B cell (primary cell): ENCODE measurements at regions of chr18 and their contacts with region 1.

Region 1: GRCh38 chr18:79393635-79394533 is 1.8 kb upstream of the NFATC1 start:
- DNase-seq: peak; percentile 65
- ATAC-seq: peak; percentile 18
- H3K4me3 ChIP-seq: peak overlapping the region in 4 of 5 experiments; percentile 42 to 78 (median 60)
- H3K4me3 Mint-ChIP-seq: peak overlapping the region; percentile 85
- H3K27ac ChIP-seq: peak overlapping the region; percentile 49 to 66
- H3K27ac Mint-ChIP-seq: peak overlapping the region; percentile 74
- H3K4me1 ChIP-seq: peaks cover 38 to 45% of the 10 kb centered on the region in 2 donors
- H3K4me1 Mint-ChIP-seq: peaks cover 36% of the 10 kb centered on the region
- H3K27me3 ChIP-seq: peaks cover 0 to 3% (median 0%) of the 10 kb centered on the region in 4 experiments
- H3K27me3 Mint-ChIP-seq: no peaks in the 10 kb centered on the region
- CTCF ChIP-seq: no peak

Region 2: DNA sequence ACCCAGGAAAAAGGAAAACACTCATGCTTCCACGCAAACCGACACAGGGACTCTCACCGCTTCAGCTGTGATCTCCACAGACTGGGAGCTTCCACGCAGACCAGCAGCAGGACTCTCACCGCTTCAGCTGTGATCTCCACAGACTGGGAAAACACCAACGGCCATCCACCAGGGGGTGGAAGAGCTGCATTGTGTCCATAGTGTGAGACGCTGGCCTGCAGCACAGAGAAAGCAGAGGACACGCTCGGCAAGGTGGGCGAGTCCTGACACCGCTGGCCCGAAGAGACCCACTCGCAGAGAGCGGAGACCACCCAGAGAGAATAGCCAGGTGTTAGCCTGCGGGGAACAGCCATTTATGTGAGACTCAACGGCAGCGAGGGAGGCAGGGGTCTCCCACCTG is 40.6 kb before region 1 on chr18:
- CTCF ChIA-PET with region 1: no interaction called
- POLR2A ChIA-PET with region 1: no interaction called
- intact Hi-C with region 1: no loop called
- DNase-seq: no peak
- ATAC-seq: no peak
- H3K4me3 ChIP-seq: no peak overlapping the region
- H3K4me3 Mint-ChIP-seq: no peak overlapping the region
- H3K27ac ChIP-seq: no peak overlapping the region
- H3K27ac Mint-ChIP-seq: no peak overlapping the region
- H3K4me1 ChIP-seq: peaks cover 0 to 9% of the 10 kb centered on the region in 2 donors
- H3K4me1 Mint-ChIP-seq: peaks cover 15% of the 10 kb centered on the region
- H3K27me3 ChIP-seq: no peaks in the 10 kb centered on the region
- H3K27me3 Mint-ChIP-seq: no peaks in the 10 kb centered on the region
- CTCF ChIP-seq: no peak

Region 3: GRCh38 chr18:79439201-79440023 is 45.5 kb after region 1 on chr18:
- CTCF ChIA-PET with region 1: interaction called, 7 read pairs
- POLR2A ChIA-PET with region 1: interaction called, 3 read pairs
- intact Hi-C with region 1: loop called (anchors 5 kb)
- DNase-seq: peak; percentile 35
- ATAC-seq: no peak
- H3K4me3 ChIP-seq: no peak overlapping the region
- H3K4me3 Mint-ChIP-seq: no peak overlapping the region
- H3K27ac ChIP-seq: peak overlapping the region in 1 of 2 donors; percentile 46
- H3K27ac Mint-ChIP-seq: peak overlapping the region; percentile 50
- H3K4me1 ChIP-seq: peaks cover 38 to 83% of the 10 kb centered on the region in 2 donors
- H3K4me1 Mint-ChIP-seq: peaks cover 76% of the 10 kb centered on the region
- H3K27me3 ChIP-seq: no peaks in the 10 kb centered on the region
- H3K27me3 Mint-ChIP-seq: no peaks in the 10 kb centered on the region
- CTCF ChIP-seq: no peak

Region 4: DNA sequence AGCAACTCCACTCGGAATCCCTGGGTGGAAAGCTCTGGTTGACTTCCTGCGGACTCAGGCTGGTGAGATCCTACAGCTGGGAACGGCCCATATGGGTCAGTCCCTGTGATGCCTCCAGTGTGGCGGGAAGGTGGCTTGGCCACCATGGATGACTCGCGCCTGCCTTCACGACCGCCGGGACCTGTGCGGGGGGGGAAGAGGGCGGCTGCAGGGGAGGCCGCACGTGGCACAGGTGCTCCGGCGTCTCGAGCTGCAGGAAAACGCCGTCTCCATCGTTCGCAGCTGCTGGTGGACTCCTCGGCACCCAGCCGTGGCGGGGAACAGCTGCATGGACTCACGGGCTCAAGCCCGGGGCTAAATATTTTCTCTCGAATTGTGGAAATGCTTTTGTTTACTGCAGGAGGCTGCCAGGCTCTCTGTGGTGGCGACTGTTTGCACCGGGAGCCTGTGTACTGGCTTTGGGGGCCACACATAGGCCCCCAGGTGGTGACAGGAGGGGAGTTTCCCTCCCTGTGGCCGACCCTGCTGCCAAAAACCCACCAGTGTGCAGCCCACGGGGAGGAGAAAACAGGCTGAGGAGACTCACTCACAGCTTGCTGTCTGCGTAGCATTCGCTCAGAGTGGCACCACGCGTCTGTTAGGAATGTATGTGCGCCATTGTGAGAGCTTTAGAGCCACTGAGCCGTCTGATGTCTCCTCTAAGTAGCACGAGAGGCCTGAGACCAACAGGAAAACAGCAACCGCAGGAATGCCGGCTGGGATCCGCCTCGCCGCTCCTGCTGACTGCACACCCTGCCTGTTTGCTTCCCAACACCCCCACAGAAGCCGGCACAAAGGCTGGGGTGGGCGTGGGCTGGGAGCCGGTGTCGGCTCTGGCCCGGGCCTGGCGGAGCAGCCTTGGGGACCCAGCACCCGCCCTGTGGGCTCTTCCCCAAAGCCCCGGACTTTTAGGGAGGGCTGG is 91.1 kb after region 1 on chr18:
- CTCF ChIA-PET with region 1: no interaction called
- POLR2A ChIA-PET with region 1: no interaction called
- intact Hi-C with region 1: no loop called
- DNase-seq: no peak
- ATAC-seq: no peak
- H3K4me3 ChIP-seq: no peak overlapping the region
- H3K4me3 Mint-ChIP-seq: no peak overlapping the region
- H3K27ac ChIP-seq: no peak overlapping the region
- H3K27ac Mint-ChIP-seq: peak overlapping the region; percentile 59
- H3K4me1 ChIP-seq: no peaks in the 10 kb centered on the region
- H3K4me1 Mint-ChIP-seq: peaks cover 3% of the 10 kb centered on the region
- H3K27me3 ChIP-seq: no peaks in the 10 kb centered on the region
- H3K27me3 Mint-ChIP-seq: no peaks in the 10 kb centered on the region
- CTCF ChIP-seq: no peak

Region 5: GRCh38 chr18:79507076-79507545 is 113.2 kb after region 1 on chr18:
- CTCF ChIA-PET with region 1: interaction called, 23 read pairs
- POLR2A ChIA-PET with region 1: interaction called, 8 read pairs
- intact Hi-C with region 1: no loop called
- DNase-seq: peak; percentile 71
- ATAC-seq: peak; percentile 29
- H3K4me3 ChIP-seq: peak overlapping the region in 4 of 5 experiments; percentile 17 to 43 (median 36)
- H3K4me3 Mint-ChIP-seq: peak overlapping the region; percentile 75
- H3K27ac ChIP-seq: peak overlapping the region; percentile 86 to 91
- H3K27ac Mint-ChIP-seq: peak overlapping the region; percentile 93
- H3K4me1 ChIP-seq: peaks cover 48 to 56% of the 10 kb centered on the region in 2 donors
- H3K4me1 Mint-ChIP-seq: peaks cover 60% of the 10 kb centered on the region
- H3K27me3 ChIP-seq: no peaks in the 10 kb centered on the region
- H3K27me3 Mint-ChIP-seq: no peaks in the 10 kb centered on the region
- CTCF ChIP-seq: no peak

Region 6: GRCh38 chr18:79528846-79529245 is 135.0 kb after region 1 on chr18:
- CTCF ChIA-PET with region 1: interaction called, 38 read pairs
- POLR2A ChIA-PET with region 1: interaction called, 13 read pairs
- intact Hi-C with region 1: no loop called
- DNase-seq: peak; percentile 83
- ATAC-seq: peak; percentile 34
- H3K4me3 ChIP-seq: no peak overlapping the region
- H3K4me3 Mint-ChIP-seq: no peak overlapping the region
- H3K27ac ChIP-seq: no peak overlapping the region
- H3K27ac Mint-ChIP-seq: no peak overlapping the region
- H3K4me1 ChIP-seq: peaks cover 15 to 24% of the 10 kb centered on the region in 2 donors
- H3K4me1 Mint-ChIP-seq: peaks cover 26% of the 10 kb centered on the region
- H3K27me3 ChIP-seq: no peaks in the 10 kb centered on the region
- H3K27me3 Mint-ChIP-seq: no peaks in the 10 kb centered on the region
- CTCF ChIP-seq: peak; percentile 94

Region 7: DNA sequence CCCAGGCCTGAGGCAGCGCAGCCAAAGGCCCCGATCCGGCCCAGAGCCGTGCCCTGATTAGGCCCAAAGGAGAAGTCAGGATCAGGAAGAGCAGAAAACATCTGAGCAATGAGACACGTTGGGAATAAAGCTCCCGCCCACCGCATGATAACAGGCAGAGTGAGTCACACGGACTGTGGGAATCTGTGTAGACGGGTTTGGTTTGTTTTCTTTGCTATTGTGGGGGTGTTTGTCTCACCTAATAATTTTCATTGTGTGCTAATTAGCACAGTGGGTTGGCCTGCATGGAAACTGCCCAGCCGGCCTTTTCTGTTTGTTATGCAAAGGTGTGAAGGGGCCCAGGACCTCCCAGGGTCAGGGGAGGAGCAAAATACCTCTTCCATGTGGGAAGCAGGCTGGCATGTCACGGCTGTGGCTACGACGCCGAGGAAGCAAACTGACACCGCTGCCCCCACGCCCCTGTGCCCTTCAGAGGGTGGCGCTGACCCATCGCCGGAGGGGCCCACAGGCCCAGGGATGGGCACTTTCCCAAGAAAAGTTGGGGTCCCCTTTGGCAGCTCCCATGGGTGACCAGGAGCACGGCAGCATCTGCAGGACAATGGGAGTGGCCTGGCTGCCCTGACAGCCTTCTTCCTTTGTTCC is 217.3 kb after region 1 on chr18:
- CTCF ChIA-PET with region 1: no interaction called
- POLR2A ChIA-PET with region 1: no interaction called
- intact Hi-C with region 1: no loop called
- DNase-seq: no peak
- ATAC-seq: no peak
- H3K4me3 ChIP-seq: no peak overlapping the region
- H3K4me3 Mint-ChIP-seq: no peak overlapping the region
- H3K27ac ChIP-seq: no peak overlapping the region
- H3K27ac Mint-ChIP-seq: no peak overlapping the region
- H3K4me1 ChIP-seq: no peaks in the 10 kb centered on the region
- H3K4me1 Mint-ChIP-seq: no peaks in the 10 kb centered on the region
- H3K27me3 ChIP-seq: peaks cover 0 to 3% (median 0%) of the 10 kb centered on the region in 4 experiments
- H3K27me3 Mint-ChIP-seq: peaks cover 3% of the 10 kb centered on the region
- CTCF ChIP-seq: no peak